K562 (cell line): ENCODE measurements at regions of chr20 and their contacts with region 1.

Region 1: DNA sequence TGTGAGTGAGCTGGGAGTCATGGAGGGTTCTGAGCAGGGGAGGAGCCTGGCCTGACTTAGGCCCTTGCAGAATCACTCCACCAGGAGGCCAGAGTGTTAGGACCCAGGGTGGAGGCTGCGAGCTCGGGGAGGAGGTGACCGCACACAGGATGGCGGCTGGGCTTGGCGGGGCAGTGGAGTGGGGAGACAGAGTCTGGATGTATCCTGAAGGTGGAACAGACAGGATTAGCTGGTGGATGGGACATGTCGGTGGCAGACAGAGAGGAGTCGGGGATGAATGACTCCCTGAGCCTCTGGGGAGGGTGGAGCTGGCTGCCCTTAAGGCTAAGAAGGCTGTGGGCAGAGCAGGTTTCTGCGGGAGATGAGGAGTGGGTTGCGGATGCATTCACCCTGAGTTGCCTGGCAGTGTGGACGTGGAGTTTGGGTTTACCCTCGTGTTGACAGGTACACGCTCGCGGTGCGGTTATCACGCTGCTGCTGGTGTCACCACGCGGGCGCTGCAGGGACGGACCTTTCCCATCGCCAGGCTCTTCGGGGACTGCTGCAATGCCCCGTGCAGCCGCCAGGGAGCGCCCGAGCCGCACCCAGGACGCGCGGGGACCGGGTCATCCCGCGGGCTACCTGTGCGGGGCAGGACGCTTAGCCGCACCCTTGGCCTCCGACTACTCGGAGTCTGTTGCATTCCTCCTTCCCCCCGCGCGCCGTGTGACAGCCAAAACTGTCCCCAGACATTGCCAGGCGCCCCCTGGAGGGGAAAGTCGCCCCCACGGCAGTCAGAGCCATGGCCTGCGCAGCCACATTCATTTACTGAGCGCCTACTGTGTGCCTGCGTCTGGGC is 43.0 kb upstream of the PTGIS start:
- DNase-seq: peak; percentile 88 to 94 (median 92)
- ATAC-seq: peak; percentile 92
- H3K4me3 ChIP-seq: peak overlapping the region; percentile 43
- H3K27ac ChIP-seq: peak overlapping the region; percentile 28; the same call in 1 of the 3 replicates
- H3K4me1 ChIP-seq: peaks cover 5 to 21% of the 10 kb centered on the region in 2 experiments; a peak in 4 of 5 replicates
- H3K27me3 ChIP-seq: peaks cover under 1 to 17% of the 10 kb centered on the region in 2 experiments; a peak in 3 of 5 replicates
- CTCF ChIP-seq: peak; percentile 98 to 99 (median 99)
- EP300 ChIP-seq: no peak
- POLR2A ChIP-seq: no peak
- RAD21 ChIP-seq: peak; percentile 99 to 100

Region 2: DNA sequence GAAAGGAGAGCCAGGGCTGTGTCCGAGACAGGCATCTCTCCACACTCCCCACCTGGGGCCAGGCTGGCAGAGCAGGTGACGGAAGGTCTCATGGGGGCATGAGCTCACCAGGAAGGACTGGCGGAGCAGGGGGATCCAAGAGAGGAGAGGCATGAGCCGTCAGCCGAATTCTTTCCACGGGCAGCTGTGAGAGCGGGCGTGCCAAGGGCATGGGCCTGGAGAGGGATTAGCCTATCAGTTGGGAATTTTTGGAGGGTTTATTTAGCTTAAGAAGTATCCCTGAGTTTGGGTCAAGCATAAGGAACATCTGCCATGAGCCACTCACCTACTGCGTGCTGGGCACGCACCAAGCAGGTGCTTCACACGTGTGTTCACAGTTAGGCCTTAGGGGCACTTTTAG is 272.9 kb before region 1 on chr20:
- CTCF ChIA-PET with region 1: interaction called, 47 read pairs
- POLR2A ChIA-PET with region 1: no interaction called
- in situ Hi-C with region 1: loop called (anchors 5 kb)
- intact Hi-C with region 1: loop called (anchors 5 kb)
- DNase-seq: no peak
- ATAC-seq: no peak
- H3K4me3 ChIP-seq: no peak overlapping the region
- H3K27ac ChIP-seq: no peak overlapping the region
- H3K4me1 ChIP-seq: peaks cover 0 to 4% of the 10 kb centered on the region in 2 experiments; a peak in 2 of 5 replicates
- H3K27me3 ChIP-seq: peaks cover 5 to 31% of the 10 kb centered on the region in 2 experiments
- CTCF ChIP-seq: no peak
- EP300 ChIP-seq: no peak
- POLR2A ChIP-seq: no peak
- RAD21 ChIP-seq: no peak

Region 3: GRCh38 chr20:49484180-49485140 is 126.5 kb before region 1 on chr20:
- CTCF ChIA-PET with region 1: no interaction called
- POLR2A ChIA-PET with region 1: no interaction called
- in situ Hi-C with region 1: no loop called
- intact Hi-C with region 1: no loop called
- DNase-seq: peak; percentile 70 to 73 (median 71)
- ATAC-seq: peak; percentile 99
- H3K4me3 ChIP-seq: no peak overlapping the region; the same call in 1 of the 2 replicates
- H3K27ac ChIP-seq: no peak overlapping the region
- H3K4me1 ChIP-seq: peaks cover 0 to 16% of the 10 kb centered on the region in 2 experiments; a peak in 2 of 5 replicates
- H3K27me3 ChIP-seq: peaks cover 2 to 17% of the 10 kb centered on the region in 2 experiments; a peak in 1 of 5 replicates
- CTCF ChIP-seq: peak; percentile 67 to 91 (median 75)
- EP300 ChIP-seq: no peak
- POLR2A ChIP-seq: no peak
- RAD21 ChIP-seq: peak; percentile 64 to 81

Region 4: DNA sequence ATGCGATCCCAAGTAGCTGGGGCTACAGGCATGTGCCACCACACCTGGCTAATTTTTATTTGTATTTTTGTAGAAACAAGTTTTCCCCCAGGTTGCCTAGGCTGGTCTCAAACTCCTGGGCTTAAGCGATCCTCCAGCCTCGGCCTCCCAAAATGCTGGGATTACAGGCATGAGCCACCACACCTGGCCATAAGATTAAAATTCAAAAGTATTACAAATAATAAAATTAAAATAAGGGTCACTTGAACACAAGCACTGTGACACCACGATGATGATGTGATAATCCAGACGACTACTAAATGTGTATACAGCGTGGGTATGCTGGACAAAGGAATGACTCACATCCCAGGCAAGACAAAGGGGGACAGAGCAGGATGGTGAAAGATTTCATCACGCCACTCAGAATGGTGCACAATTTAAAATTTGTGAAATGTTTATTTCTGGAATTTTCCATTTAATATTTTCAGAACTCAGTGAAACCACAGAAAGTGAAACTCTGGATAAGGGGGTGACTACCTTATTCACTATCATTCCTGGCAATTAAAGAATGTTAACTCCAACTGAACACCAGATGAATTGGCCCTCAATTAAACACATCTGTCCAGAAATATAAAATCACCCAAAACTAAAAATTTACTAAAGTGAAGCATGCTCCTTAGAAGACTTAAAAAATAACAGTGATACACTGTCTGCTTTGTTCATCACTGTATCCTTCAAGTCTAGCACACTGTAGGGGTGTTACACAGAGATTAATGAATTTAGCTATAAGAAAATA is 89.7 kb after region 1 on chr20:
- CTCF ChIA-PET with region 1: no interaction called
- POLR2A ChIA-PET with region 1: no interaction called
- in situ Hi-C with region 1: no loop called
- intact Hi-C with region 1: loop called (anchors 2 kb)
- DNase-seq: peak in 2 of 4 experiments; percentile 40 to 69
- ATAC-seq: peak; percentile 86
- H3K4me3 ChIP-seq: no peak overlapping the region
- H3K27ac ChIP-seq: peak overlapping the region; percentile 59
- H3K4me1 ChIP-seq: peaks cover 11 to 37% of the 10 kb centered on the region in 2 experiments
- H3K27me3 ChIP-seq: no peaks in the 10 kb centered on the region
- CTCF ChIP-seq: no peak
- EP300 ChIP-seq: peak; percentile 50
- POLR2A ChIP-seq: no peak
- RAD21 ChIP-seq: no peak

Region 5: DNA sequence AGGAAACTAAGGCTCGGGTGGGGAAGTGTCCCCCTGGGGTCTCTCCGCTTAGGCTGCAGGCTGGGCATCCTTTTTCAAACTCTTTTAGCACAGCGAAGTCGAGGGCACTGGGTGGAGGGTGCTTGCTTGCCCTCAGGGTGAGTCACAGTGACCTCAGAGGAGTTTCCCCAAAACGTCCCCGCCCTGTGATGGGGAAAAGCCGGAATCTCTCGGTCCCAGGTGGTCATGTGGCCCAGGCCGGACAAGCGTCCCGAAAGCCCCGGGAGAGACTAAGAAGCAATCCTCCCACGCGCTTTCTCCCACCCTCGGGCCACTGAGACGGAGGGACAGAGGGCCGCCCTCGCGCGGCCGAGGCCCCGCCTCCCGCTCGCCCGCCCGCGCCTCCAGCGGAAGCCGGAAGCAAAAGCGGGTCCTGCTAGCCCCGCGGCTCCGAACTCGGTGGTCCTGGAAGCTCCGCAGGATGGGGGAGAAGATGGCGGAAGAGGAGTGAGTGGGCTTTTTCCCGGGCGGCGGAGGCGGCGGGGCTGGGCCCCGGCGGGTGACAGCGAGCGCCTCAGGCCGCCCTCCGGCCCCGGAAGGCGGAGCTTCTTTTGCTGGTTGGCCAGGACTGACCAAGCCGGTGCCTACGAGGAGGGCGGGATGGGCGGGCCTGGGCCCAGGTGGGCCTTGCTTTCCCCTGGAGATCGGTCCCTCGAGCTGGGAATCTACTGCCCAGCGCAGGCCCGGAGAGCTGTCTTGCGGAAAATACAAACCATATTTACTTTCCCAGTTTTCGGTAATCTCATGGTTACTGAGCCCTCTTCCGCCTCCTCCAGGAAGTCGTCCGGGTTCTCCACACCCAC is 201.8 kb after region 1 on chr20 and contains the start of gene SLC9A8:
- CTCF ChIA-PET with region 1: interaction called, 9 read pairs
- POLR2A ChIA-PET with region 1: interaction called, 4 read pairs
- in situ Hi-C with region 1: no loop called
- intact Hi-C with region 1: loop called (anchors 5 kb)
- DNase-seq: peak; percentile 91 to 96 (median 94)
- ATAC-seq: peak; percentile 98
- H3K4me3 ChIP-seq: peak within 1 kb of the TSS; percentile 65
- H3K27ac ChIP-seq: peak within 1 kb of the TSS; percentile 91
- H3K4me1 ChIP-seq: peaks cover 13 to 23% of the 10 kb centered on the region in 2 experiments; a peak in 4 of 5 replicates
- H3K27me3 ChIP-seq: no peaks in the 10 kb centered on the region
- CTCF ChIP-seq: peak; percentile 38 to 53 (median 43); a peak in 5 of 6 replicates
- EP300 ChIP-seq: peak; percentile 53; the same call in 1 of the 2 replicates
- POLR2A ChIP-seq: peak; percentile 77
- RAD21 ChIP-seq: peak; percentile 8 to 25; a peak in 3 of 4 replicates
- polyA plus RNA-seq, gene SLC9A8: 0.56 to 0.76 TPM

Region 6: DNA sequence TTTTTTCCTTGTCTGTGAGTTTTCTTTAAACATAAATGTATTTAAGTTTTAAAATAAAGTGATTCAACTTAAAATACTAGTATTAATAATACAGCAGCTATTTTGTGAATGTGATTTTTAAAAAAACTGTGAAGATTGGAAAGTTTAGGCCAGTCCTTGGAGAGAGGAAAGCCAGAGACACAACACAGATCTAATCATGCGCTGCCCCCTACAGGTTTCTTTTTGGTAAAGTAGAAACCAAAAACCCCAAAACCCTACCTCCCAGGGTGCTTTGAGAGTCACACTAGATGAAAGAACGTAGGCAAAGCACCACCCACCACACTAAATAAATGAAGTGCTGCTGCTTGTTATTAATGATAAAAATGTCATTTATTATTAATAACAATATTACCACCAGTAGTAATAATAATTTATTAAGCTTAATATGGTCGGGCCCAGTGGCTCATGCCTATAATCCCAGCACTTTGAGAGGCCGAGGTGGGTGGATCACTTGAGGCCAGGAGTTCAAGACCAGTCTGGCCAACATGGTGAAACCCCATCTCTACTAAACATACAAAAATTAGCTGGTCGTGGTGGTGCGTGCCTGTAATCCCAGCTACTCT is 235.4 kb after region 1 on chr20:
- CTCF ChIA-PET with region 1: interaction called, 70 read pairs
- POLR2A ChIA-PET with region 1: interaction called, 4 read pairs
- in situ Hi-C with region 1: loop called (anchors 5 kb)
- intact Hi-C with region 1: loop called (anchors 1 kb)
- DNase-seq: peak; percentile 38 to 76 (median 60)
- ATAC-seq: peak; percentile 94
- H3K4me3 ChIP-seq: no peak overlapping the region
- H3K27ac ChIP-seq: no peak overlapping the region
- H3K4me1 ChIP-seq: peaks cover 4 to 6% of the 10 kb centered on the region in 2 experiments; a peak in 2 of 5 replicates
- H3K27me3 ChIP-seq: no peaks in the 10 kb centered on the region
- CTCF ChIP-seq: peak; percentile 63 to 83 (median 73)
- EP300 ChIP-seq: no peak
- POLR2A ChIP-seq: no peak
- RAD21 ChIP-seq: peak; percentile 82 to 86

Region 7: GRCh38 chr20:49928401-49929141 is 317.7 kb after region 1 on chr20:
- CTCF ChIA-PET with region 1: interaction called, 12 read pairs
- POLR2A ChIA-PET with region 1: no interaction called
- in situ Hi-C with region 1: no loop called
- intact Hi-C with region 1: loop called (anchors 2 kb)
- DNase-seq: peak; percentile 76 to 88 (median 80)
- ATAC-seq: peak; percentile 95
- H3K4me3 ChIP-seq: no peak overlapping the region
- H3K27ac ChIP-seq: no peak overlapping the region
- H3K4me1 ChIP-seq: no peaks in the 10 kb centered on the region; a peak in 2 of 5 replicates
- H3K27me3 ChIP-seq: no peaks in the 10 kb centered on the region
- CTCF ChIP-seq: peak; percentile 85 to 95 (median 91)
- EP300 ChIP-seq: 0 out of 2 replicates have a peak, but pooled peaks have one; percentile 11
- POLR2A ChIP-seq: no peak
- RAD21 ChIP-seq: peak; percentile 66 to 82

Region 8: GRCh38 chr20:50003253-50003656 is 392.3 kb after region 1 on chr20:
- CTCF ChIA-PET with region 1: no interaction called
- POLR2A ChIA-PET with region 1: no interaction called
- in situ Hi-C with region 1: no loop called
- intact Hi-C with region 1: no loop called
- DNase-seq: no peak
- ATAC-seq: peak; percentile 72
- H3K4me3 ChIP-seq: no peak overlapping the region
- H3K27ac ChIP-seq: no peak overlapping the region
- H3K4me1 ChIP-seq: peaks cover 3 to 7% of the 10 kb centered on the region in 2 experiments; a peak in 3 of 5 replicates
- H3K27me3 ChIP-seq: no peaks in the 10 kb centered on the region
- CTCF ChIP-seq: no peak
- EP300 ChIP-seq: 0 out of 2 replicates have a peak, but pooled peaks have one; percentile 9
- POLR2A ChIP-seq: no peak
- RAD21 ChIP-seq: no peak

Region 9: GRCh38 chr20:50179507-50180016 is 568.6 kb after region 1 on chr20:
- CTCF ChIA-PET with region 1: no interaction called
- POLR2A ChIA-PET with region 1: no interaction called
- in situ Hi-C with region 1: no loop called
- intact Hi-C with region 1: loop called (anchors 5 kb)
- DNase-seq: no peak
- ATAC-seq: peak; percentile 74
- H3K4me3 ChIP-seq: no peak overlapping the region
- H3K27ac ChIP-seq: peak overlapping the region; percentile 33; the same call in 1 of the 3 replicates
- H3K4me1 ChIP-seq: peaks cover 14% of the 10 kb centered on the region in 2 experiments
- H3K27me3 ChIP-seq: no peaks in the 10 kb centered on the region
- CTCF ChIP-seq: no peak
- EP300 ChIP-seq: no peak
- POLR2A ChIP-seq: no peak
- RAD21 ChIP-seq: no peak